Dendritic cell treated with granulocyte-macrophage colony-stimulating factor and Interleukin-4, amounts not matched to agents 40 ng/mL and 50 ng/mL, for 4 days (primary cell): ENCODE measurements at regions of chr1 and their contacts with region 1.

Region 1: DNA sequence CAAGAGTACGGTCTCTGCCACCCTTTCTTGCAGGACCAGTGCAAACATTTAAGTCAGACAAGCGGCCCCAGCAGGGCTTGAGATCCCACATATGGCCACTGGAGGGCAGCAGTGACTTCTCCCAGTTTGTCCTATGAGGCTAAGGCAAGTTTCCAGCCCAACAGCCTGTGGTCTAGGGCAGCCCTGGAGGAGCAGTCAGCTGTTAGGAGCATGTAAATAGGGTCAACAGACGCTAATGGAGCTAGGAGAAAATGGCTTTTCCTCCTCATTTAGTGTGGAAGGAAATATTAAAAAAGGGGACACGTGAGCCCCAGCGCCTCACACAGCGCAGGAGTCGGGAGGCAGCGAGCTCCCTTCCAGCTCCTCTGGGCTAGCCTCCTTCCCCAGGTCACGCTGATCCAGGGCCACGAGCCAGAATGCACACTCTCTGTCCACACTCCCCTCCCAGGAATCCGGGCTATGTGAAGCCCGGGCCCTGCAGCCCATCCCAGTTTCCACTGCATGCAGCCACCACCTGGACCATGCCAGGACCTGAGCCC is 95.6 kb downstream of the LAMC2 start:
- H3K4me3 Mint-ChIP-seq: no peak overlapping the region
- H3K27ac Mint-ChIP-seq: no peak overlapping the region
- H3K4me1 Mint-ChIP-seq: peaks cover 45% of the 10 kb centered on the region
- H3K27me3 Mint-ChIP-seq: peaks cover 7% of the 10 kb centered on the region

Region 2: DNA sequence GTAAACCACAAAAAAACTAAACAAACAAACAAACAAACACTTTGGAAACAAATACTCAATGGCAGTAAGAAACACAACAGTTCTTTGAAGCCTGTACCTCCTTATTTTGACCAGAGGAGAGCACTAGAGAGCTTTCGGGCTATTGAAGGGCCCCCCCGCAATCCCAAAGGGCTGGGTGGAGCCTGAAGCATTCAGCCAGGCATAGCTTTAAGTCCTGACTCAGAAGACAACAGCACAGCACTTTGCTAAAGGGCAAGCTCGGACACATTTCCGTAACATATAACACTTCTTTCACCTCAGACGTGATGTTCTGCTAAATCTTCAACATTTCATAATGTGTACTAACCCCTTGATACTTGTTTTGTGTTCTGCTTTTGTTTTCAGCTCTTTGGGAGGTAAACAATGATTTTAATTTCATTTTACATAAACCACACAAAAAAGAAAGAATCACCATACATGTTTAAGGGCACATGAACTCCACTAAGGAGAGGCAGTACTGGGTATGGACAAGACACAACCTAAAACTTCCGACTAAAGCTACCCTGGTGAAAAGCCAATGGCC is 319.0 kb before region 1 on chr1:
- intact Hi-C with region 1: loop called (anchors 1 kb)
- H3K4me3 Mint-ChIP-seq: peak overlapping the region; percentile 26
- H3K27ac Mint-ChIP-seq: peak overlapping the region; percentile 34
- H3K4me1 Mint-ChIP-seq: peaks cover 6% of the 10 kb centered on the region
- H3K27me3 Mint-ChIP-seq: peaks cover 7% of the 10 kb centered on the region

Region 3: GRCh38 chr1:183480971-183481441 is 199.4 kb after region 1 on chr1:
- intact Hi-C with region 1: loop called (anchors 10 kb)
- H3K4me3 Mint-ChIP-seq: no peak overlapping the region
- H3K27ac Mint-ChIP-seq: peak overlapping the region; percentile 28
- H3K4me1 Mint-ChIP-seq: peaks cover 57% of the 10 kb centered on the region
- H3K27me3 Mint-ChIP-seq: no peaks in the 10 kb centered on the region

Region 4: GRCh38 chr1:183543619-183544204 is 262.1 kb after region 1 on chr1:
- intact Hi-C with region 1: loop called (anchors 2 kb)
- H3K4me3 Mint-ChIP-seq: no peak overlapping the region
- H3K27ac Mint-ChIP-seq: peak overlapping the region; percentile 25
- H3K4me1 Mint-ChIP-seq: peaks cover 26% of the 10 kb centered on the region
- H3K27me3 Mint-ChIP-seq: no peaks in the 10 kb centered on the region

Region 5: DNA sequence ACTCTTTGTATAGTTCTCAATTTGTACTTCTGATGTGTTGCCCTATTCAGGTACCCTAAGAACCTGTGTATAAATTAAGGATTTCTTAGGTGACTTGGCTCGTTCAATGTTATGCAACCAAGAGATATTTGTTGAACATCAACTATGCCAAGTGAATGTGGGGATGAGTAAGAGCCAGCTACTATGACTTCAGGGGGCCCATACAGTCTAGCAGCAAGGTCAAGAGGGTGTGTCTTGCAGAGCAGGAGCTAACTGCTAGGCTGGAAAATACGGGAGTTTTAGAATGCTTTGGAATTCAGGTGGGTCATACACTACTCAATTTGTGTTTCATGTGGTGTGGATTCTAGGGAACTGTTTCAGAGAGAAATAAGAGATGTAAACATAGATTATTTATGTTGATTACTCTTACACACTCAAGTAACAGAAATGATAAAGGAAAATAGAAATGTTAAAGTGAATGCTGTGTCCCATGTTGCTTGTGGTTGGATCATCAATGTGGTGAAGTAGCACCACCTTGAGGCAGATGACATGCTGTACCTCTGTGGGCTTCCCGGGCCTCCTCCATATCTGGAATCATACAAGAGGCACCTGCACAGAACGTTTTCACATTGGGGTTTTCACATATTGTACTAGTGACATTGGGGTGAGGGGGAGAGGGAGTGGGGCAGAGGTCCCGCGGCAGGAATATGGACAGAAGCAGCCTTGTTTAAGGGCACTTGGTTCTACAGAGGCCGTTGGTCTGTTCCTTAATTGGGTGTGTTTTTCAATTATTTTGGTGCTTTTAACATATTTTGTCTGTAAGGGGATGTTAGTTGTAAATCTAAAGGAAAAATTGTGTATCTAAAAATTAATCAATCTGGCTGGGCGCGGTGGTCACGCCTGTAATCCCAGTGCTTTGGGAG is 341.5 kb after region 1 on chr1:
- intact Hi-C with region 1: loop called (anchors 10 kb)
- H3K4me3 Mint-ChIP-seq: no peak overlapping the region
- H3K27ac Mint-ChIP-seq: peak overlapping the region; percentile 73
- H3K4me1 Mint-ChIP-seq: peaks cover 37% of the 10 kb centered on the region
- H3K27me3 Mint-ChIP-seq: no peaks in the 10 kb centered on the region

Region 6: DNA sequence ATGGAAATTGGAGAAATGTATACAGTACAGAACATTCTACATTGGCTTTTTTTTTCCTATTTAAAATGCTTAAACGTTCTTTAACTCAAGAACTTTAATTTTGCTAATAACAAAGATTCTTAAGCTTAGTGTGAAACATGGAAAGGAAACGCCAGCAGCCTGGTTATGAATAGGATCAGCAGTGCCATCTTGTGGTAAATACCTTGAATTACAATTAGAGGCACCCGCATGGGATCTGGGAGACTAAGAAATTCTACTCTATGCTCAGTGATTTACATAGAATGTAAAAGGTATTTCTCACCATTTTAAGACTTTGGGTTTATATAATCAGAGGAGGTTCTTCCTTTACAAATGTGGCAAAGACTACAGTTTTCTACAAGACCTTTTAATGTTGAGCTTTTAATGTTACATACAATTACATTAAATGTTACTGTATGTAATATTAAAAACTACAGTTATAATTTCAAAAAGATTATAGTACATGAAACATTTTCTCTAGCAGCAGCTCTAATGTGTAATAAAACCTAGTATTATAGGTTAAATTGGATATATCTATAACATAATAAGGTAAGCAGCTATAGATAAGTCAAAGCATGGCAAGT is 403.6 kb after region 1 on chr1:
- intact Hi-C with region 1: loop called (anchors 5 kb)
- H3K4me3 Mint-ChIP-seq: no peak overlapping the region
- H3K27ac Mint-ChIP-seq: no peak overlapping the region
- H3K4me1 Mint-ChIP-seq: peaks cover 30% of the 10 kb centered on the region
- H3K27me3 Mint-ChIP-seq: peaks cover 12% of the 10 kb centered on the region